H1 (cell line): ENCODE measurements at regions of chr12 and their contacts with region 1.

Region 1: GRCh38 chr12:51823875-51824565 is 24.5 kb downstream of the FIGNL2 start:
- DNase-seq: no peak
- H3K4me3 ChIP-seq: no peak overlapping the region
- H3K27ac ChIP-seq: no peak overlapping the region
- H3K4me1 ChIP-seq: peaks cover 6 to 29% (median 22%) of the 10 kb centered on the region in 4 experiments
- H3K27me3 ChIP-seq: peaks cover 0 to 18% (median 13%) of the 10 kb centered on the region in 4 experiments; a peak in 5 of 7 replicates
- CTCF ChIP-seq: peak; percentile 34 to 75 (median 67)
- EP300 ChIP-seq: no peak
- POLR2A ChIP-seq: no peak
- RAD21 ChIP-seq: peak; percentile 74 to 76

Region 2: DNA sequence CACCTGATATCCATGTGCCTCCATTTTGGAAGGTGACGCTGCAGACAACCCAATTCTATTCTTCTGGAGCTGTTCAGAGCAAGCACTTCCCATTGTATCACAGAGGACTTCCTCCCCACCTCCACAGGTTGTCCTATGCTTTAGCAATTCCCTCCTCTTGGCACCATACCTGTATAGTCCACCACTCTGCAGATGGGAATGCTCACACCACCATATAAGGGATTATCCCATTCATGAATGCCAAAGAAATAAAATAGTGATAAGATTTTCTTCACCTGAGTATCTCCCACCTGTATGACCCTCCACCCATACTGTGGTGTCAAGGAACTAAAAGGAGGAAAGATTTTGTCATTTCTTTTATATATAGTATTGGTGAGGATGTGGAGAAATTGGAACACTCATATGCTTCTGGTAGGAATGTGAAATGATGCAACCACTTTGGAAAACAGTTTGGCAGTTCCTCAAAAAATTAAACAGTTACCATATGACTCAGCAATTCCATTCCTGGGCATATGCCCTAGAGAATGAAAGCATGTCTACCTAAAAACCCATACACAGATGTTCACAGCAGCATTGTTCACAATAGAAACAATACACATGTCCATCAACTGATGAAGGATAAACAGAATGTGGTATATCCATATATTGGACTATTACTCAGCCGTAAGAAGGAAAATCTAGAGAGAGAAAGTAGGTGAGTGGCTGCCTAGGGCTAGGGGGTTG is 50.7 kb before region 1 on chr12:
- CTCF ChIA-PET with region 1: no interaction called
- POLR2A ChIA-PET with region 1: no interaction called
- DNase-seq: no peak
- H3K4me3 ChIP-seq: no peak overlapping the region
- H3K27ac ChIP-seq: no peak overlapping the region
- H3K4me1 ChIP-seq: no peaks in the 10 kb centered on the region
- H3K27me3 ChIP-seq: no peaks in the 10 kb centered on the region
- CTCF ChIP-seq: no peak
- EP300 ChIP-seq: no peak
- POLR2A ChIP-seq: no peak
- RAD21 ChIP-seq: no peak

Region 3: GRCh38 chr12:51793201-51793600 is 30.8 kb before region 1 on chr12:
- CTCF ChIA-PET with region 1: interaction called, 16 read pairs
- POLR2A ChIA-PET with region 1: no interaction called
- DNase-seq: no peak
- H3K4me3 ChIP-seq: no peak overlapping the region
- H3K27ac ChIP-seq: no peak overlapping the region
- H3K4me1 ChIP-seq: no peaks in the 10 kb centered on the region
- H3K27me3 ChIP-seq: no peaks in the 10 kb centered on the region
- CTCF ChIP-seq: no peak
- EP300 ChIP-seq: no peak
- POLR2A ChIP-seq: no peak
- RAD21 ChIP-seq: no peak

Region 4: DNA sequence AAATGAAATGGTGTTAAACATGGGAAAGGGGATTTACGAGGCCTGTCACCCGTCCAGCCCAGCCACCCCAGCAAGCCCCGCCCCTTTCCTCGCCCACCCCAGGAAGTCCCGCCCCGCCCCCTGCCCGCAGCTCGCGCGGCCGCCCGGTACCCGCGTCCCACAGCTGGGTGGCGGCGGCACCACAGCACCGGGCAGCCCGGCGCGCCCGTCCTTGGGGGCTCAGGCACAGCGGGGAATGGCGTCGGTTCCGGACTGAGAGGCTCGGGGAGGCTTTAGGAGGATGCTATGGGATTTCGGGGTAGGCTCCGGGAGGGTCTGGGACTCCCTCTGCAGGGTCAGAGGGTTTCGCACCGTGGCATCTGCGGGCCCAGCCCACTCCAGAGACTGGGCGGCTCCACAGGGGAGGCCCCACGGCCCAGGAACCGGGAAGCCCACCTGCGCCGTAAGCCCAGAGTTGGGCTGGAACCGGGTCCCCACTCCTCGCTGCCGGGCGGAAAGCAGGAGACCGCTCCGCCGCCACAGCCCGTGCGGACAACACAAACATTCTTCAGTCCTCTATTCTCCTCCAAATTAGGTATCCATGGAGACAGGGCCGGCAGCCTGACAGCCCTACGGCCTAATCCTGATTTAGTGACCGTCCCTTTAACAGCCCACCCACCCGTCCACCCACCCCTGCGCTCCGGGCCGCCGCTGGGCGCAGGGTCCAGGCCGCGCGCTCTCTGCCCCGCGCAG is 23.1 kb after region 1 on chr12:
- CTCF ChIA-PET with region 1: interaction called, 26 read pairs
- POLR2A ChIA-PET with region 1: interaction called, 10 read pairs
- DNase-seq: peak in 1 of 2 experiments; percentile 81
- H3K4me3 ChIP-seq: peak overlapping the region; percentile 61 to 91 (median 76)
- H3K27ac ChIP-seq: no peak overlapping the region
- H3K4me1 ChIP-seq: peaks cover 12 to 33% (median 24%) of the 10 kb centered on the region in 4 experiments
- H3K27me3 ChIP-seq: peaks cover 6 to 31% (median 31%) of the 10 kb centered on the region in 4 experiments
- CTCF ChIP-seq: no peak
- EP300 ChIP-seq: no peak
- POLR2A ChIP-seq: no peak
- RAD21 ChIP-seq: no peak

Region 5: GRCh38 chr12:51871126-51871525 is 47.1 kb after region 1 on chr12:
- CTCF ChIA-PET with region 1: interaction called, 139 read pairs
- POLR2A ChIA-PET with region 1: interaction called, 11 read pairs
- DNase-seq: no peak
- H3K4me3 ChIP-seq: no peak overlapping the region
- H3K27ac ChIP-seq: no peak overlapping the region
- H3K4me1 ChIP-seq: peaks cover 4 to 30% (median 20%) of the 10 kb centered on the region in 4 experiments
- H3K27me3 ChIP-seq: peaks cover 0 to 29% (median 24%) of the 10 kb centered on the region in 4 experiments; a peak in 6 of 7 replicates
- CTCF ChIP-seq: peak in 2 of 3 experiments; percentile 6 to 31; a peak in 3 of 4 replicates
- EP300 ChIP-seq: no peak
- POLR2A ChIP-seq: no peak
- RAD21 ChIP-seq: peak in 1 of 2 experiments; percentile 9; a peak in 1 of 4 replicates

Region 6: GRCh38 chr12:51951199-51951842 is 127.3 kb after region 1 on chr12 and contains the start of gene ACVR1B:
- CTCF ChIA-PET with region 1: no interaction called
- POLR2A ChIA-PET with region 1: no interaction called
- DNase-seq: peak in 1 of 2 experiments; percentile 87
- H3K4me3 ChIP-seq: peak within 1 kb of the TSS; percentile 73 to 95 (median 90)
- H3K27ac ChIP-seq: peak within 1 kb of the TSS; percentile 52; the same call in 1 of the 2 replicates
- H3K4me1 ChIP-seq: peaks cover 0 to 3% (median 2%) of the 10 kb centered on the region in 4 experiments; a peak in 6 of 7 replicates
- H3K27me3 ChIP-seq: peaks cover 7 to 47% (median 34%) of the 10 kb centered on the region in 4 experiments
- CTCF ChIP-seq: no peak
- EP300 ChIP-seq: no peak
- POLR2A ChIP-seq: peak in 1 of 2 experiments; percentile 1; a peak in 1 of 3 replicates
- RAD21 ChIP-seq: no peak
- total RNA-seq, gene ACVR1B: 13.5 and 16.0 TPM in 2 replicates